ENCODE measurements at regions of chr1 and their contacts with region 1.

Region 1: DNA sequence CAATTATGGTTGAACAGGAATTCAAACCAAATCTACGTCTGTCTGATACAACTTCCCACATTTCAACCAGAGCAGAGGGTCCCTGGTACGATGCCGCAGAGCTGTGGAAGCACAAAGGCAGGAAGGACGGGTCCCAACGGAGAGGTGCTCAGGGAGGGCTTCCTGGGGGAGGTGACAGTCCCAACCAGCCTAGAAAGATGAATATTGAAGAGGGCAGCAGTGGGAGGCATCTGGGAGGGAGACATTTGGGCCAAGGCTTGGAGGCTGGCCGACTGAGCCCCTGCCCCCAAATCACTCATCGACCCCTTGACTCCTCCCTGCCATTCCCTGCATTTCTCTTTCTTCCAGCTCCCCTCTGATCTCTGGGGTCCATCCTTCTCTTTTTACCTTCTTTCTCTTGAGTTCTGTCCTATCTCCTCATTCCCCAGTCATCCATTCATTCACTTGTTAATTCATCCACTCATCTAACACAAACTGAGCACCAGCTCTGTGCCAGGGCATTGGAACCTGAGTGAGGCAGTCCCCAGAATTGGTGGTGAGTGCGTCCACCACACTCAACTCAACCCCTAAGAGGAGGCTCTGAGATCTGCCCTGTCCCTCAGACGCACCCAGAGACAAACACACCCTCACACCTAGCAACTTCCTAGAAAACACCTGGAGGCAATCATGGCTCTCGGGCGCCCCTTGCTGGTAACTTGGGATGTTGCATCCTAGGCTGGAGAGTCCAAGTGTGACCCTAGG is 13.2 kb upstream of the CELA3B start:
- DNase-seq: peak; percentile 69 to 91 (median 79)
- ATAC-seq: peak; percentile 97
- H3K4me3 ChIP-seq: no peak overlapping the region
- H3K4me3 Mint-ChIP-seq: no peak overlapping the region
- H3K27ac ChIP-seq: no peak overlapping the region
- H3K27ac Mint-ChIP-seq: no peak overlapping the region
- H3K4me1 ChIP-seq: peaks cover 8% of the 10 kb centered on the region
- H3K4me1 Mint-ChIP-seq: peaks cover 7% of the 10 kb centered on the region
- H3K27me3 ChIP-seq: no peaks in the 10 kb centered on the region
- H3K27me3 Mint-ChIP-seq: no peaks in the 10 kb centered on the region
- CTCF ChIP-seq: peak; percentile 90

Region 2: GRCh38 chr1:21508580-21509350 is 454.9 kb before region 1 on chr1:
- CTCF ChIA-PET with region 1: no interaction called
- POLR2A ChIA-PET with region 1: no interaction called
- intact Hi-C with region 1: loop called (anchors 2 to 5 kb)
- DNase-seq: peak; percentile 23 to 67 (median 57)
- ATAC-seq: peak; percentile 86
- H3K4me3 ChIP-seq: peak overlapping the region in 1 of 2 experiments; percentile 5
- H3K4me3 Mint-ChIP-seq: peak overlapping the region; percentile 72
- H3K27ac ChIP-seq: no peak overlapping the region
- H3K27ac Mint-ChIP-seq: no peak overlapping the region
- H3K4me1 ChIP-seq: peaks cover 6% of the 10 kb centered on the region
- H3K4me1 Mint-ChIP-seq: peaks cover 13% of the 10 kb centered on the region
- H3K27me3 ChIP-seq: peaks cover 16 to 17% of the 10 kb centered on the region in 2 experiments
- H3K27me3 Mint-ChIP-seq: peaks cover 53% of the 10 kb centered on the region
- CTCF ChIP-seq: no peak

Region 3: GRCh38 chr1:21703318-21703963 is 260.2 kb before region 1 on chr1:
- CTCF ChIA-PET with region 1: interaction called, 3 read pairs
- POLR2A ChIA-PET with region 1: no interaction called
- intact Hi-C with region 1: loop called in 1 of 2 experiments (anchors 5 kb)
- DNase-seq: peak in 2 of 9 experiments; percentile 5 to 19
- ATAC-seq: no peak
- H3K4me3 ChIP-seq: no peak overlapping the region
- H3K4me3 Mint-ChIP-seq: no peak overlapping the region
- H3K27ac ChIP-seq: no peak overlapping the region
- H3K27ac Mint-ChIP-seq: no peak overlapping the region
- H3K4me1 ChIP-seq: no peaks in the 10 kb centered on the region
- H3K4me1 Mint-ChIP-seq: peaks cover 2% of the 10 kb centered on the region
- H3K27me3 ChIP-seq: no peaks in the 10 kb centered on the region
- H3K27me3 Mint-ChIP-seq: no peaks in the 10 kb centered on the region
- CTCF ChIP-seq: no peak

Region 4: DNA sequence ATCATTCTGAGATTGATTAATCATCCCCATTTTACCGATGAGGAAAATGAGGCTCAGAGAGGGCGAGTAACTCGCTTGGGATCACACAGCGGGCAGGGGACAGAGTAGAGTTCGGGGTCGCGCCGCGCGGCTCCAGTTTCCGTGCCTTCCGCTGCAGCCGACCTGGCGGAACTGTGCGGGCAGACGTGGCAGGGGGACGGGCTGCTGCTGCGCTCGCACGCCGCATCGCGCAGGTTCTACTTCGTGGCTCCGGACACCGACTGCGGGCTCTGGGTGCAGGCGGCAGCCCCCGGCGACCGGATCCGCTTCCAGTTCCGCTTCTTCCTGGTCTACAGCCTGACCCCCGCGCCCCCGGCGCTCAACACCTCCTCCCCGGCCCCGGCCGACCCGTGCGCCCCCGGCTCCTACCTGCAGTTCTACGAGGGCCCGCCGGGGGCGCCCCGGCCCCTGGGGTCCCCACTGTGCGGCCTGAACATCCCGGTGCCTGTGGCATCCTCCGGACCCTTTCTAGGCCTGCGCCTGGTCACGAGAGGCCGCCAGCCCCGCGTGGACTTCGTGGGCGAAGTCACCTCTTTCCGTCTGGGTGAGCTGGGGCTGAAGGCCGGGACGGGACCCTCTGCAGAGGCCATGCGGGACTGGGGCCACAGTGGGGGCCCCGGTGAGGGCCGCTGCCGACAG is 149.3 kb before region 1 on chr1:
- CTCF ChIA-PET with region 1: no interaction called
- POLR2A ChIA-PET with region 1: no interaction called
- intact Hi-C with region 1: loop called in 1 of 2 experiments (anchors 10 kb)
- DNase-seq: peak in 5 of 9 experiments; percentile 4 to 59 (median 45)
- ATAC-seq: peak; percentile 72
- H3K4me3 ChIP-seq: peak overlapping the region; percentile 31 to 41
- H3K4me3 Mint-ChIP-seq: peak overlapping the region; percentile 53
- H3K27ac ChIP-seq: no peak overlapping the region
- H3K27ac Mint-ChIP-seq: no peak overlapping the region
- H3K4me1 ChIP-seq: no peaks in the 10 kb centered on the region
- H3K4me1 Mint-ChIP-seq: peaks cover 8% of the 10 kb centered on the region
- H3K27me3 ChIP-seq: no peaks in the 10 kb centered on the region
- H3K27me3 Mint-ChIP-seq: peaks cover 18% of the 10 kb centered on the region
- CTCF ChIP-seq: peak; percentile 55

Region 5: GRCh38 chr1:22018583-22019559 is 55.2 kb after region 1 on chr1:
- CTCF ChIA-PET with region 1: interaction called, 6 read pairs
- POLR2A ChIA-PET with region 1: no interaction called
- intact Hi-C with region 1: loop called (anchors 1 to 5 kb)
- DNase-seq: peak in 8 of 9 experiments; percentile 47 to 85 (median 70)
- ATAC-seq: peak; percentile 91
- H3K4me3 ChIP-seq: no peak overlapping the region
- H3K4me3 Mint-ChIP-seq: peak overlapping the region; percentile 15
- H3K27ac ChIP-seq: peak overlapping the region; percentile 6 to 61
- H3K27ac Mint-ChIP-seq: peak overlapping the region; percentile 93
- H3K4me1 ChIP-seq: peaks cover 26% of the 10 kb centered on the region
- H3K4me1 Mint-ChIP-seq: peaks cover 32% of the 10 kb centered on the region
- H3K27me3 ChIP-seq: no peaks in the 10 kb centered on the region
- H3K27me3 Mint-ChIP-seq: no peaks in the 10 kb centered on the region
- CTCF ChIP-seq: no peak

Measured in CD8-positive, alpha-beta T cell (primary cell).